Endothelial cell of umbilical vein (primary cell): ENCODE measurements at regions of chr2 and their contacts with region 1.

Region 1: GRCh38 chr2:237512774-237513466 is 25.9 kb downstream of the MLPH start:
- DNase-seq: peak; percentile 87
- H3K4me3 ChIP-seq: no peak overlapping the region
- H3K27ac ChIP-seq: no peak overlapping the region
- H3K4me1 ChIP-seq: peaks cover 9% of the 10 kb centered on the region
- H3K27me3 ChIP-seq: peaks cover 0 to 1% of the 10 kb centered on the region in 2 experiments
- CTCF ChIP-seq: peak; percentile 91 to 92
- POLR2A ChIP-seq: no peak

Region 2: DNA sequence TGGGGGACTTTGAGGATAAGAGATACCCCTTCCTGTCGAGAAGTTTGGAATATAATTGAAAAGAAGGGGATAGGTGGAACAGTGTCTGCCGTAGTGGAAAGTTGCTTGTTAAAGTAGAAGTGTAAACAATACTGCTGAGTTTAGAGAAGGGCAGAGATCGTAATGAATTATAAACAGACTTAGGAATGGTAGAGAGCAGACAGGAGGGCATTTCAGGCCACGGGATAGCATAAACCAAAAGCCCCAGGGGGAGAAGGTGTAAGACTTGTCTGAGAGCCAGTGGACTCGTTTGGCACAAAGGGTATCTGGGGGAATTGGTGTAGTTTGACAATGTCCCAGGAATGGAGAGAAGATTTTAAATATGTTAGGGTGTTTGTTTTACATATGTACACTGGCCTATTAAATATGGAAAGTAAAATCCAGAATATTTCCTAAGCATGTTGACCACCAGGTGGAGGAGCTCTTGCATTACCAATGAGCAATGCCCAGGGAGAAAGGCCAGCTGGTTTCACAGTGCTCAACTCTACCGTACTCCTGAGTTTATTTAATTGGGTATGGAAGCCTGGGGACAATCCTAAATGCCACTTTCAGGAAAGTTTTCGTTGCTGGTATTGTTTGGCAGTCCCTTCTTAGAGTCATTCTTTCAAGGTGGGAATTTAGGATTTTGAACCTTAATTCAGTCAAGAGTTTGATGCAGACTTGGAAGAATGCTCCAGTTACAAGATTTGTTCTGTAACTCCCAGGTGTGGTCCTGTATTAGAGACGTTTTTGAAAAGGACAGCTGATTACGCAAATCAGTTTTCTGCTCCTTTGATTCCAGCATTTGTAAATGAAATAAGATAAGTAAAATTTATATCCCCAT is 419.8 kb before region 1 on chr2:
- CTCF ChIA-PET with region 1: interaction called, 15 read pairs
- POLR2A ChIA-PET with region 1: no interaction called
- dilution Hi-C with region 1: no loop called
- intact Hi-C with region 1: loop called (anchors 1 kb)
- DNase-seq: peak; percentile 84
- H3K4me3 ChIP-seq: peak overlapping the region in 1 of 3 experiments; percentile 8
- H3K27ac ChIP-seq: peak overlapping the region; percentile 56
- H3K4me1 ChIP-seq: peaks cover 67% of the 10 kb centered on the region
- H3K27me3 ChIP-seq: no peaks in the 10 kb centered on the region
- CTCF ChIP-seq: peak; percentile 50 to 65
- POLR2A ChIP-seq: no peak

Region 3: DNA sequence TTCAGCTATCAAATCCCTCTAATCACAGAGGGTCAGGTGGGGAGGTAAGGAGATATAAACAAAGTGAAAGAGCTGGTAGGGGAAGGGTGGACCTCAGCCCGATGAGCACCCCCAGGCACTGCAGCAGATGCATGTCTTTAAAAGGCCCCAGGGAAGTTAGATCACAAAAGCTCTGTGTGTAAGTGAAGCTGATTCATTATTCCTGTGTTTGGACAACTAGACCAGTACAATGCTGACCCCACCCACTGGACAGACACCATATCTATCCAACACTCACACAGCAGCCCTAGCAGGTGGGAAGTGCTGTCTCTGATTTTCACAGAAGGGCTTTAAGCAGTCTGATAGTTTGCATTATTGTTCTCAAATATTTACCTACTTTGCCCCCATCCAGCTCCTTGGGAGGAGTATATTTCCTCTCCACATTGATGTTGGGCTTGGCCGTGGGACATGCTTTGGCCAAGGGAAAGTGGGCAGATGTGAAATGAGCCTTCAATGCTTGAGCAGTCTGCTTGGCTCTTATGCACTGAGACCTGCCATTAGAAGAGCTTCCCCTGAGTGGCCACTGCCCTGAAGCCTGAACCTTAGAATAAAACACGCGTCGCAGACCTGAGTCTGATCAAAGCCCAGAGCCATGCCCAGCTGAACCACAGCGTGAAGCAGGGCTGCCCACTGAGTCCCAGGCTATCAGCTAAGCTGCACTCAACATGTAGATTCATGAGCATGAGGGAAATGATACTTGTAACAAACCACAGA is 315.9 kb before region 1 on chr2:
- CTCF ChIA-PET with region 1: no interaction called
- POLR2A ChIA-PET with region 1: no interaction called
- dilution Hi-C with region 1: no loop called
- intact Hi-C with region 1: no loop called
- DNase-seq: no peak
- H3K4me3 ChIP-seq: no peak overlapping the region
- H3K27ac ChIP-seq: no peak overlapping the region
- H3K4me1 ChIP-seq: peaks cover 3% of the 10 kb centered on the region
- H3K27me3 ChIP-seq: no peaks in the 10 kb centered on the region
- CTCF ChIP-seq: no peak
- POLR2A ChIP-seq: no peak

Region 4: DNA sequence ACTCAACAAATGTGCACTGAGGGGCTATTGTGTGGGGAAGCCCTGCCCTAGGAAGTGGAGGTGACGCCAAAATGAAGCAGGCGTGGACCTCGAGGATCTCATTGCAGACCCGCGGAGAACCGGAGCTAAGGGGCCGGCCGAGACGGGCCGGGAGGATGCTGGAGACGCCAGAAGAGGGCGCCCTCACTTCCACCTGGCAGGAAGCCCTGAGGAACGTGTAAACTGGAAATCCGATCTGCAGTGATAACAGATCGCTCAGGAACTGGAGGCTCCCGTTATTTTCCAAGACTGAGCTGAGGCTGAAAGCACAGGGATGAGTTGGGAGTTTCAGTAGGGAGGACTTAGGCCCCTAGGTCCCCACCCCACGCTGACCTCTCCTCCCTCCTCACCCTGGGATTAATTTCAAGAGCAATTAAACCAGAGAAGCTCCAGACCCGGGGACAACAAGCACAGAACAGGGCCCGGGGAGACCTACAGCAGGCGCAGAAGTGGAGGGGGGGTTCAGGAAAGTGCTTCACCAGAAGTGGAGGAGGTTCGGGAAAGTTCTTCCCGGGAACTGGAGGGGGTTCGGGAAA is 91.3 kb before region 1 on chr2:
- CTCF ChIA-PET with region 1: interaction called, 28 read pairs
- POLR2A ChIA-PET with region 1: no interaction called
- dilution Hi-C with region 1: no loop called
- intact Hi-C with region 1: no loop called
- DNase-seq: peak; percentile 76
- H3K4me3 ChIP-seq: no peak overlapping the region
- H3K27ac ChIP-seq: no peak overlapping the region
- H3K4me1 ChIP-seq: peaks cover 5% of the 10 kb centered on the region
- H3K27me3 ChIP-seq: peaks cover 20 to 23% of the 10 kb centered on the region in 2 experiments
- CTCF ChIP-seq: peak; percentile 84 to 85
- POLR2A ChIP-seq: no peak

Region 5: DNA sequence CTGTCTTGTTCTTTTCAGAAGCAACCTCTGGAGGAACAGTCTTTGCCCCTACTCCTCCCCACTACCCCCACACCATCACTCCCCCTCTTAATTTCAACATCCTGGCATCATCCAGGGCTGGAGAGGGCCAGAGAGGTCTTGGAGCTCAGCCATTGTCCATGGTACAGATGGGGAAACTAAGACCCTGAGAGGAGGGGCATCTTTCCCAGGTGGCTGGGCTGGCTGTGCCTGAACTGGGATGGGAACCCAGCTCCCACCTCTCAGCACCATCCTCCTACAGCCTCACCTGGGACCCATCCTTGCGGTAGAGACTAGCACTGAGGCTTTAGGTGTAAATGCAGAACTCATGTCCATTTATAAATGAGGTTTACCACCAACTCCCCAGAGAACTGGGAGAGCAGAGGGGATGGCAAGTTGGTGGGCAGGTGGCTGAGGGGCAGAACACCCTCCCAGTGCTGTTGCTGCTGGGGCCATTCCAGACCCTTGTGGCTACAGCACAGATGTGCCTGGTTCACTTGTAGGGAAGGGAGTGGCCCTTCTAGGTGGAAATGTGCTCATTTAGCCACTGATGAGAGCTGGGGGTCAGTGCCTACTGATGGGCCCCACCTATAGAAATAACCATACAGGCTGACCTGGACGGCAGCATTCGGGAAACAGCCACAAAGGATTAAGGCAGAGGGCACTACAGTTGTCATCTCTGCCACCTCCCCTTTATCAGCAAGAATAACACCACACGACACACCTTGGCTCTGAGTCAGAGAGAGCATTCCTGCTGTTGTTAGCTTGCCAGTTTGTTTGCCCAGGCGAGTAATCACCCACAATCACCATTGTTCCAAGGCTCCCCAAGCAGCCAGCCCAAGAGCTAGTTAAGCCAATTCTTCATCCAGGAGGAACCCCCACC is 23.8 kb before region 1 on chr2:
- CTCF ChIA-PET with region 1: interaction called, 10 read pairs
- POLR2A ChIA-PET with region 1: no interaction called
- dilution Hi-C with region 1: no loop called
- intact Hi-C with region 1: no loop called
- DNase-seq: no peak
- H3K4me3 ChIP-seq: no peak overlapping the region
- H3K27ac ChIP-seq: no peak overlapping the region
- H3K4me1 ChIP-seq: no peaks in the 10 kb centered on the region
- H3K27me3 ChIP-seq: peaks cover 39 to 50% of the 10 kb centered on the region in 2 experiments
- CTCF ChIP-seq: no peak
- POLR2A ChIP-seq: no peak

Region 6: GRCh38 chr2:237540823-237541222 is 27.9 kb after region 1 on chr2:
- CTCF ChIA-PET with region 1: interaction called, 15 read pairs
- POLR2A ChIA-PET with region 1: no interaction called
- dilution Hi-C with region 1: no loop called
- intact Hi-C with region 1: no loop called
- DNase-seq: no peak
- H3K4me3 ChIP-seq: no peak overlapping the region
- H3K27ac ChIP-seq: no peak overlapping the region
- H3K4me1 ChIP-seq: no peaks in the 10 kb centered on the region
- H3K27me3 ChIP-seq: no peaks in the 10 kb centered on the region
- CTCF ChIP-seq: no peak
- POLR2A ChIP-seq: no peak

Region 7: GRCh38 chr2:237603718-237604362 is 90.9 kb after region 1 on chr2:
- CTCF ChIA-PET with region 1: interaction called, 12 read pairs
- POLR2A ChIA-PET with region 1: no interaction called
- dilution Hi-C with region 1: no loop called
- intact Hi-C with region 1: no loop called
- DNase-seq: peak; percentile 96
- H3K4me3 ChIP-seq: no peak overlapping the region
- H3K27ac ChIP-seq: peak overlapping the region; percentile 91
- H3K4me1 ChIP-seq: peaks cover 29% of the 10 kb centered on the region
- H3K27me3 ChIP-seq: no peaks in the 10 kb centered on the region
- CTCF ChIP-seq: no peak
- POLR2A ChIP-seq: no peak

Region 8: DNA sequence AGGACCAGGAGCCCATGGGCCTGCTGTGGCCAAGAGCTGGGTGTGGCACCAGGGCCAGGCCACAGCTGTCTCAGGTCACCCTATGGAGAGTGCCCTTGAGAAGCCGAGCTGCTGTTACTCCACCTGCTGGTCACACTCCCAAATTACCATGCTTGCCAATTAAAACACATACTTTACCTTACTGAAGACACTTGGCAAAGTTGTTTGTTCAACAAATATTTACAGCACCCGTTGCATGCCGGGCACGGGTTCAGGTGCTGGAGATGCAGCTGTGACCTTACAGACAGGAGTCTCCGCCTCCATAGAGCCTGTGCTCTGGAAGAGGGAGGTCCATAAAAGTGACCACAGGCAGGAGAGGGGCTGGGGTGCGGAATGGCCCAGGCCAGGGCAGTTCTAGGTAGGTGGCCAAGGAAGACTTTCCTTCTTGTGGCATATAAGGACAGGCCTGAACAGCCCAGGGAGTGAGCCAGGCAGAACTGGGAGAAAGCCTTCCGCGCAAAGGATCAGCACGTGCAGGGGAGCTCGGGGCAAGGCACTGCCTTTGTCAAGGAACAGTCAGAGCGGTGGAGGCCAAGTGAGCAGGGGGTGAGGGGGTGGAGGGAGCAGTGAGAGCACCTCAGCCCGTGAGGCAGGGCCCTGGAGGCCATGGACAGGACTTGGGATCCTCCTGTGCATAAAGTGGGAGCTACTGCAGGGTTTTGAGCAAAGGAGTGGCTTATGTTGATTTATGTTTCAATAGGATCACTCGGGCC is 262.1 kb after region 1 on chr2:
- CTCF ChIA-PET with region 1: interaction called, 24 read pairs
- POLR2A ChIA-PET with region 1: no interaction called
- dilution Hi-C with region 1: no loop called
- intact Hi-C with region 1: loop called (anchors 1 kb)
- DNase-seq: peak; percentile 69
- H3K4me3 ChIP-seq: no peak overlapping the region
- H3K27ac ChIP-seq: no peak overlapping the region
- H3K4me1 ChIP-seq: no peaks in the 10 kb centered on the region
- H3K27me3 ChIP-seq: no peaks in the 10 kb centered on the region
- CTCF ChIP-seq: peak; percentile 76 to 77
- POLR2A ChIP-seq: no peak